Transverse colon (tissue), 4 donors: ENCODE measurements at regions of chr18 and their contacts with region 1.

Region 1: DNA sequence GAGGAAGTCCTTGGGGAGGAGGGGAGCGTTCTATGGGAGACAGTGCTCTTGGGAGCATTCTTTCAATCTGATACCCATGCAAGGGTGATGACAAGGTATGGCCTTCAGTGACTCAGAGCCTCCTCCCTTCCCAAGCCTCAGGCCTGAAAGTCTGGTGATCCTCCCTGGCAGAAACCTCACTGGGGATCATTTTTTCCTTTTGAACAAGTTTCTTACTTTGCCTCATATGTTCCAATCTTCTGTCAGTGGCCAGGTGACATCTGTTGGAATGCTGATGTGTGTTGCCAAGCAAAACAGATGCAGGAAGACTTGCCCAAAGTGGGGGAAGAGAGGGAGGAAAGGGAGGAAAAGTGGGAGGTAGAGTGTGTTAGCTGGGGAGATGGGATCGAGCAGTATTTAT is 224.8 kb downstream of the NEDD4L start:
- DNase-seq: no peak
- H3K4me3 ChIP-seq: no peak overlapping the region
- H3K27ac ChIP-seq: no peak overlapping the region
- H3K4me1 ChIP-seq: peaks cover 0 to 30% (median 3%) of the 10 kb centered on the region in 4 donors
- H3K27me3 ChIP-seq: no peaks in the 10 kb centered on the region
- CTCF ChIP-seq: no peak
- EP300 ChIP-seq: no peak
- POLR2A ChIP-seq: no peak

Region 2: GRCh38 chr18:57223144-57223870 is 1045.5 kb before region 1 on chr18:
- in situ Hi-C with region 1: no loop called
- intact Hi-C with region 1: loop called (anchors 5 kb)
- DNase-seq: no peak
- H3K4me3 ChIP-seq: no peak overlapping the region
- H3K27ac ChIP-seq: no peak overlapping the region
- H3K4me1 ChIP-seq: no peaks in the 10 kb centered on the region
- H3K27me3 ChIP-seq: no peaks in the 10 kb centered on the region
- CTCF ChIP-seq: no peak
- EP300 ChIP-seq: no peak
- POLR2A ChIP-seq: no peak

Region 3: GRCh38 chr18:58378411-58379379 is 109.8 kb after region 1 on chr18:
- in situ Hi-C with region 1: no loop called
- intact Hi-C with region 1: no loop called
- DNase-seq: no peak
- H3K4me3 ChIP-seq: no peak overlapping the region
- H3K27ac ChIP-seq: no peak overlapping the region
- H3K4me1 ChIP-seq: no peaks in the 10 kb centered on the region
- H3K27me3 ChIP-seq: no peaks in the 10 kb centered on the region
- CTCF ChIP-seq: no peak
- EP300 ChIP-seq: no peak
- POLR2A ChIP-seq: no peak